IMR-90 (cell line): ENCODE measurements at regions of chr2 and their contacts with region 1.

Region 1: DNA sequence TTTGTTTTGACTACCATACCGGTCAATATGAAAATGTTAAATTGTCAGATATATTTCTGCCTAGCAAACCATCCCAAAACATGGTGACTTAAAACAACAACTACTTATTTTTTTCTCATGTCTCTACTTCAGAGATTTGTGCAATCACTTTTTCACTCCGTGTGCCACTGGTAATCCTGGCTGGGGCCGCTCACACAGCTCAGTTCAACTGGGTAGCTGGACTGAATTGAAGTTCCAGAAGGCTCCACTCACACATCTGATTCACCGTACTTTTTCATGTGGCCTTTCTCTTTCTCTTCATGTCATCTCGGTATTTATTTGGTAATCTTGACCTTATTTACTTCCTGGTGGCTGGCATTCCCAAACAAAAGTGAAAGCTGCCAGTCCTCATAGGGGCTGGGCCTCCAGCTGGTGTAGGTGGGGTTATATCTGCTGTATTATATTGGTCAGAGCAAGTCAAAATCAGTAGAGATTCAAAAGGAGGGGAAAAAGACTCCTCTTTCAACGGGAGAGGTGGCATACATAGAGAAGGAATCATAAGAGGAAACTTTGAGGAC is 513.9 kb upstream of the NXPH2 start:
- DNase-seq: no peak
- ATAC-seq: no peak
- H3K4me3 ChIP-seq: no peak overlapping the region
- H3K27ac ChIP-seq: no peak overlapping the region
- H3K4me1 ChIP-seq: no peaks in the 10 kb centered on the region
- H3K27me3 ChIP-seq: no peaks in the 10 kb centered on the region
- CTCF ChIP-seq: no peak
- POLR2A ChIP-seq: no peak
- RAD21 ChIP-seq: no peak

Region 2: DNA sequence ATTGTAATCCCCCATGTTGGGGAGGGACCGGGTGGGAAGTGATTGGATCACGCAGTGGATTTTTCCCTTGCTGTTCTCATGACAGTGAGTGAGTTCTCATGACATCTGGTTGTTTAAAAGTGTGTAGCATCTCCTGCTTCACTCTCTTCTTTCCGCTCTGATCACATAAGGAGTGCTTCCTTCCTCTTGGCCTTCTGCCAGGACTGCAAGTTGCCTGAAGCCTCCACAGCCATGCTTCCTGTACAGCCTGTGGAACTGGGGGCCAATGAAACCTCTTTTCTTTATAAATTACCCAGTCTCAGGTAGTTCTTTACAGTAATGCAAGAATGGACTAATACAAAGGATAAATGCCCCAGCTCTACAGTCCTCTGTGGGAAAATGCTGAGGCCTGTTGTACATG is 76.4 kb before region 1 on chr2:
- CTCF ChIA-PET with region 1: no interaction called
- POLR2A ChIA-PET with region 1: no interaction called
- dilution Hi-C with region 1: no loop called
- in situ Hi-C with region 1: no loop called
- intact Hi-C with region 1: loop called (anchors 2 kb)
- DNase-seq: no peak
- ATAC-seq: no peak
- H3K4me3 ChIP-seq: no peak overlapping the region
- H3K27ac ChIP-seq: no peak overlapping the region
- H3K4me1 ChIP-seq: no peaks in the 10 kb centered on the region
- H3K27me3 ChIP-seq: no peaks in the 10 kb centered on the region
- CTCF ChIP-seq: no peak
- POLR2A ChIP-seq: no peak
- RAD21 ChIP-seq: no peak

Region 3: DNA sequence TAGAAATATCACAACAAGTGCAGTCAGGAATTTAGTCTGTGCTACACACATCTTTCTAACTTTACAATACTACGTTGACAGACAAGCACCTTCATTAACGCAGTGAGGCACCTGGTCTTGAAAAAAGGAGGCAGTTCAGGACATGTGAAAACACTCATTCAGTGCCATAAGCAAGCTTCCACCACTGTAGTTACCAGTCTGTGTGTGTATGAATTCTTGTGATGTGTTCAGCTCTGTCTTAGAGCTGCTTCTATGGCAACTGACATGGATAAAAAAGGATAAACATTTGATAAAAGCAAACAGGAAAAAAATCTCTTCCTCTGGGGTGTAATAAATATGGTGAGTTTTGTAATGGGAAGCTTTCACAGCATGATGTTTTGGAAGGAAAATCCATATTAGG is 109.9 kb after region 1 on chr2:
- CTCF ChIA-PET with region 1: no interaction called
- POLR2A ChIA-PET with region 1: no interaction called
- dilution Hi-C with region 1: no loop called
- in situ Hi-C with region 1: no loop called
- intact Hi-C with region 1: no loop called
- DNase-seq: no peak
- ATAC-seq: no peak
- H3K4me3 ChIP-seq: no peak overlapping the region
- H3K27ac ChIP-seq: no peak overlapping the region
- H3K4me1 ChIP-seq: no peaks in the 10 kb centered on the region
- H3K27me3 ChIP-seq: no peaks in the 10 kb centered on the region
- CTCF ChIP-seq: no peak
- POLR2A ChIP-seq: no peak
- RAD21 ChIP-seq: no peak

Region 4: GRCh38 chr2:139813340-139813739 is 519.3 kb after region 1 on chr2:
- CTCF ChIA-PET with region 1: no interaction called
- POLR2A ChIA-PET with region 1: no interaction called
- dilution Hi-C with region 1: no loop called
- in situ Hi-C with region 1: no loop called
- intact Hi-C with region 1: no loop called
- DNase-seq: no peak
- ATAC-seq: no peak
- H3K4me3 ChIP-seq: no peak overlapping the region
- H3K27ac ChIP-seq: no peak overlapping the region
- H3K4me1 ChIP-seq: no peaks in the 10 kb centered on the region
- H3K27me3 ChIP-seq: no peaks in the 10 kb centered on the region
- CTCF ChIP-seq: no peak
- POLR2A ChIP-seq: no peak
- RAD21 ChIP-seq: no peak